ENCODE measurements at regions of chr10 and their contacts with region 1.

Region 1: DNA sequence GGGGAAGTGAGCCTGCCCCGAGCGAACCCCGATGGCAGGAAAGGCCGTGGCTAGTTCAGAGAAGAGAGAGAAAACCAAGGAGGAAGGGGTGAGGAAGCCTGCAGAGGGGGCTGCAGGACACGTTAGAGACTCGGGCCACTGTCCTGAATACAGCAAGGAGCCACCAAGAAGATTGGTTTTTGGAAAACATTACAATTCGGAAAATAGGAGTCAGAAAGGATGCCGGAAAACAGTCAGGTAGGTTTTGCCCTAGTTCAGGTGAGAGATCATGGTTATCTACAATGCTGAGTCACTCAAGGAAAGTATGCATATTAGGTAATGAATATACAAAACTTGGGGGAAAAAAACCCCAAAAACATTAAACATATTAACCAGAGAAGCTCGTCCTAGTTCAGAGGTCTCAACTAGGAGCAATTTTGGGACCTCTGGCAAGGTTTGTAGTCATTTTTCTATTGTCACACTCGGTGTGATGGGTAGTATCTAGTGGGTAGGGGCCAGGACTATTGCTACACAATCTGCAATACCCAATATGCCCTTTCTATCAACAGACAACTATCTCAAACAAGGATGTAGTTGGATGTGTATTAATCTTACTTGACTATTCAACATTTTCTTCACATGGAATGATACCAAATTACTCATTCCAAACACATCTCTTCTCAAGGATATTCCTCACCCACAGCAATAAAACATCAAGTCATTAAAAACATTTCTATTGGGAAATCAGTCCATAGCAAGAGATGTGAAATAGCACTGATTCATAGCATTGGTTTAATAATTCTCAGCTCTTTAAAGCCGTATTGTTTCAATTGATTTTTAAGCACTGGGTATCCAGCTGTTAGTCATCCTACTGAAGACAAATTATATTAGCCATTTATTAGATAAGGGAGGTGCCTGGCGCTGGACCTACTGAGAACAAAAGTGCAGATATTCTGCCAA is 74.4 kb upstream of the RSU1 start:
- DNase-seq: peak; percentile 30
- ATAC-seq: peak; percentile 91
- H3K4me3 ChIP-seq: 0 out of 6 replicates have a peak overlapping the region, but pooled peaks of 1 of the 3 experiments have one; percentile 15
- H3K27ac ChIP-seq: no peak overlapping the region
- H3K4me1 ChIP-seq: no peaks in the 10 kb centered on the region
- H3K27me3 ChIP-seq: no peaks in the 10 kb centered on the region
- CTCF ChIP-seq: peak; percentile 59
- EP300 ChIP-seq: no peak
- POLR2A ChIP-seq: peak in 1 of 2 experiments; percentile 79; a peak in 2 of 4 replicates
- RAD21 ChIP-seq: no peak

Region 2: GRCh38 chr10:16644147-16644546 is 247.5 kb before region 1 on chr10:
- CTCF ChIA-PET with region 1: no interaction called
- POLR2A ChIA-PET with region 1: no interaction called
- in situ Hi-C with region 1: no loop called
- intact Hi-C with region 1: no loop called
- DNase-seq: no peak
- ATAC-seq: no peak
- H3K4me3 ChIP-seq: no peak overlapping the region
- H3K27ac ChIP-seq: no peak overlapping the region
- H3K4me1 ChIP-seq: no peaks in the 10 kb centered on the region
- H3K27me3 ChIP-seq: no peaks in the 10 kb centered on the region
- CTCF ChIP-seq: no peak
- EP300 ChIP-seq: no peak
- POLR2A ChIP-seq: no peak
- RAD21 ChIP-seq: no peak

Region 3: DNA sequence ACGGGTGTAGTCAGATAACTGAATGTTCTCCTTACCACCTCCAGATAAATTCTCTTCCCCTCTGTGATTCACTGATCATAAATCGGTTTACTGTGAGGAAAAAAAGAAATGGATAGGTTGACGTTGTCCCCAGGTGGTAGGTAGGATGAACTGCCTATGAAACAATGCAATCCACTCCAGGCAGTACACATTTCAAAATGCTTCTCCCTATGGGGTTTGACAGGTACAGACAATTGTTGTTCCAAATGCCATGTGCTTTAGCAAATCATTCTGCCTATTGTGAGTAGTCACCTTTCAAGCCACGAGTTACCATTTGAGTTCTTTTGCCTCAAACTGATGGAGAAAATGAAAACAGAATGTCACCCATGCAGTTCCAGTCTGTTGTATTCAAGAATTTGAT is 358.2 kb after region 1 on chr10:
- CTCF ChIA-PET with region 1: no interaction called
- POLR2A ChIA-PET with region 1: no interaction called
- in situ Hi-C with region 1: loop called (anchors 10 kb)
- intact Hi-C with region 1: loop called (anchors 1 kb)
- DNase-seq: no peak
- ATAC-seq: no peak
- H3K4me3 ChIP-seq: no peak overlapping the region
- H3K27ac ChIP-seq: no peak overlapping the region
- H3K4me1 ChIP-seq: no peaks in the 10 kb centered on the region
- H3K27me3 ChIP-seq: no peaks in the 10 kb centered on the region
- CTCF ChIP-seq: no peak
- EP300 ChIP-seq: no peak
- POLR2A ChIP-seq: no peak
- RAD21 ChIP-seq: no peak

Measured in HepG2 (cell line).